Dorsolateral prefrontal cortex (tissue), 120 donors: ENCODE measurements at regions of chr5 and their contacts with region 1.

Region 1: DNA sequence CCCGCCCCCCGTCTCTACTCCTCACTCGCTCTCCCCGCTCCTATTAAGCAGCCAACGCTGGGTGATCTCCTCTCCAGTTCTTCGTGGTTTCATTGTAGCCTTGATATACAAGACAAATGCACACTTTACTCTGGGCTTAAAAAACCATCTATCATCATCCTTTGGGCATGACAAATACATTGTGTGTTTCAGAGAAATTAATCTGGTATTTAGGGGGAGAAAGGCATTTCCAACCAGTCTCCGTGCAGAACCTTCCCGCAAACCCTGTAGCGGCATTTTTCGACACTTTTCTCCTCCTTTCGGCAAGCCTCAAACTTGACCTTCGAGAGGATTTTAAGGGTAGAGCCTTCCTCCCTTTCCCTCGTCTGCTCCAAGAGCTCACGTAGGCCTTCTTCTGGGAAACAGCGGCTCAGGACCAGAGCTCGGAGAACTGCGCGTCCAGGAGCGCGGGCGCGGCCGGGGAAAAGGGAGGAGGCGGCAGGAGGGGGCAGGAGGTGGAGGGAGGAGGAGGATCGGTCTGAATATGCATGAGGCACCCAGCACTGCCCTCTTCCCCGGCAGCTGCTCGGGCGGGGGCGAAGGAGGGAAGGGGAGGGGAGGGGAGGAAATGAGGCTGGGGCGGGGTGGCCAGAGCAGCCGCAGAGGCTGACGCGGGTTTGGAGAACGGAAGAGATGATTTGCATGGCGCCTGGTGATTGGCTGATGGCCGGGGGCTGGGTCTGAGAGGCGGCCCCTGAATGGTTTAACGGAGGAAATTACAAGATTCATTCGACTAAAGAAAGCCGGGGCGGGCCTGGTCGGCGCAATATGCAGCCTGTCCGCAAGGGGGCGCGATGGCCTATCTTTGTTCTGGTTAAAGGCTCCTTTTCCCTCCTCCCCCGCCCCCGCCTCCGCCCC is 127.5 kb downstream of the TMEM161B start:
- DNase-seq: peak; percentile 98 to 100 (median 100)
- H3K4me3 ChIP-seq: peak overlapping the region; percentile 45 to 88 (median 73)
- H3K27ac ChIP-seq: peak overlapping the region; percentile 92 to 100 (median 98)
- H3K27me3 ChIP-seq: no peaks in the 10 kb centered on the region
- CTCF ChIP-seq: peak; percentile 67 to 94 (median 81)

Region 2: GRCh38 chr5:87412630-87413342 is 728.3 kb before region 1 on chr5 and contains the start of gene CCNH:
- intact Hi-C with region 1: loop called in 1 of 2 experiments (anchors 10 kb)
- DNase-seq: peak; percentile 95 to 100 (median 99)
- H3K4me3 ChIP-seq: peak within 1 kb of the TSS; percentile 62 to 99 (median 89)
- H3K27ac ChIP-seq: peak within 1 kb of the TSS; percentile 73 to 100 (median 97)
- H3K27me3 ChIP-seq: no peaks in the 10 kb centered on the region
- CTCF ChIP-seq: peak in 22 of 56 donors; percentile 6 to 54 (median 28)
- total RNA-seq, gene CCNH: 69.5 to 140 (median 104) TPM

Region 3: DNA sequence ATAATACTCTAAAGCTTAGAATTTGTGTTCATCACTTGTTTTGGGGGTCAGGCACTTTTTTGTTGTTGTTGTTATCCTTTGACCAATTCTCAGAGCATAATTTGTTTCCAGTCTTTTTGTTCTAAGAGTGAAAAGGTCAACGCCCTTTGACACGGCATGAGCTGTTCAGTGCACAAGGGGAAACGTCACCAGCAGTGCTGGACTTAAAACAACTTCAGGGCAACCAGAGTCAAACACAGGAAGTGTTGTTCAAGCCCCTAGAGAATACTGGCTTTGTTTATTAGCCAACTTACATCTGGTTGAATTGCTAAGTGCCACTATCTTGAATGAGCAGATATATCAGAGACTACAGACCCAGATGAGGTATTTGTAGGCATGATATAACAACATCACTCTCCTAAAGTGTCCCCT is 241.4 kb before region 1 on chr5:
- intact Hi-C with region 1: loop called (anchors 1 kb)
- DNase-seq: peak in 8 of 10 donors; percentile 41 to 87 (median 66)
- H3K4me3 ChIP-seq: peak overlapping the region in 16 of 59 donors; percentile 2 to 38 (median 18)
- H3K27ac ChIP-seq: peak overlapping the region; percentile 59 to 94 (median 89)
- H3K27me3 ChIP-seq: no peaks in the 10 kb centered on the region
- CTCF ChIP-seq: peak in 4 of 56 donors; percentile 6 to 24 (median 12)

Region 4: GRCh38 chr5:87949676-87950631 is 191.2 kb before region 1 on chr5:
- intact Hi-C with region 1: loop called (anchors 1 to 2 kb)
- DNase-seq: peak in 7 of 10 donors; percentile 30 to 74 (median 54)
- H3K4me3 ChIP-seq: peak overlapping the region in 20 of 59 donors; percentile 1 to 52 (median 19)
- H3K27ac ChIP-seq: peak overlapping the region; percentile 28 to 93 (median 86)
- H3K27me3 ChIP-seq: no peaks in the 10 kb centered on the region
- CTCF ChIP-seq: peak in 7 of 56 donors; percentile 6 to 20 (median 13)

Region 5: DNA sequence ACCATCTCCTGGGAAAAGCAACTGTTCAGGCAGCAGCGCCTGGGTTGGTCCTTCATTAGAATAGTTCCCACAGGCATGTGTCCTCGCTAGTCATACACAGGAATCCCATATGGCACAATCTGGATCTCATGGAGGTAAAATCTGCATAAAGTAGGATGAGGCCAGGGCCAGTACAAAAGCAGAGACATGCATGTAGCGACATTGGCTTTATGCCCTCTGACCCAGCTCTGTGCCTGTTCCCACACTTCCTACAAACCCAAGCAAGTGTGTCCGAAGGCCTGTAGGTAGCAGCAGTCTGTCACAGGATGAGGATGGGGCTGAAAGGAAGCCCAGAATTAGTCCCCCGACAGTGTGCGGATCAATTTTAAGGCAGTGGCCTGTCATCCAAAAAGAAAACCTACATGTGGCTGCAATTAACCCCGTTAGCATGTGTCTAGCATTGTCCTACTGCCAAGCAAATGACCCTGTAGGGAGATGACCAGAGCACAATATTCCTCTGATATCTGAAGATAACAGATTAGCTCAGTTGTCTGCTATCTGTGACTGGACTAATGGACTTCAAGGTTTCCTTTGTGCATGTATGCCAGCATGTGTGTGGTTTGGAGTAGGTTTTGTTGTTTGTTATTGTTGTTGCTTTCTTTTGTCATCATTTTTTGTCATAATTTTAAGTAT is 51.2 kb before region 1 on chr5:
- intact Hi-C with region 1: loop called in 1 of 2 experiments (anchors 2 kb)
- DNase-seq: no peak
- H3K4me3 ChIP-seq: no peak overlapping the region
- H3K27ac ChIP-seq: peak overlapping the region in 16 of 59 donors; percentile 4 to 66 (median 22)
- H3K27me3 ChIP-seq: no peaks in the 10 kb centered on the region
- CTCF ChIP-seq: no peak

Region 6: GRCh38 chr5:88268385-88269184 is 127.5 kb after region 1 on chr5 and contains the start of gene TMEM161B:
- intact Hi-C with region 1: loop called in 1 of 2 experiments (anchors 5 kb)
- DNase-seq: peak; percentile 69 to 91 (median 88)
- H3K4me3 ChIP-seq: peak within 1 kb of the TSS; percentile 64 to 98 (median 91)
- H3K27ac ChIP-seq: peak within 1 kb of the TSS in 46 of 59 donors; percentile 6 to 89 (median 58)
- H3K27me3 ChIP-seq: no peaks in the 10 kb centered on the region
- CTCF ChIP-seq: peak in 11 of 56 donors; percentile 5 to 28 (median 15)
- total RNA-seq, gene TMEM161B: 20.0 to 41.1 (median 28.6) TPM

Region 7: DNA sequence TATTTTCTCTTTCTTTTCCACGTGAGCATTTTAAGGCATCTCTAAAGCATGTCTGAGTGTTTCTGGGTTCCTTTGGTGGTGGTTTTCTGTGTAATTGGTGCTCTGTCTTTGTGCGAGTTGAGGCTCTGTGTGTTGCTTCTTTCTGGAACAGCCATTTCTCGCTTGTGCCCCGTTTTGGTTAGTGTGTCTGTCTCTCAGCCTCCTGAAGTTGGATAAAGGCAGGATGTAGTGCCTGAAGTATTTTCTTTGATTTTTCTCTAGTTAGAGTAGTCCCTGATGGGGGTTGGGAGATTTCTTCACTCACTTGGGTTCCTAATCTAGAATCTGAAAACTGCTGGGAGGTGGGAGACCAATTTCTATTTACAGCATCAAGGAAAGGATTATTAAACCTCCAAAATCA is 257.2 kb after region 1 on chr5:
- intact Hi-C with region 1: loop called (anchors 2 to 10 kb)
- DNase-seq: no peak
- H3K4me3 ChIP-seq: peak overlapping the region; percentile 5 to 70 (median 48)
- H3K27ac ChIP-seq: peak overlapping the region; percentile 31 to 99 (median 95)
- H3K27me3 ChIP-seq: no peaks in the 10 kb centered on the region
- CTCF ChIP-seq: no peak